ENCODE measurements at regions of chr17 and their contacts with region 1.

Region 1: GRCh38 chr17:27654654-27655524 is 23.9 kb downstream of the LGALS9 start:
- DNase-seq: peak; percentile 67 to 82
- ATAC-seq: peak; percentile 72

Region 2: GRCh38 chr17:27609611-27610303 is 45.1 kb before region 1 on chr17:
- intact Hi-C with region 1: loop called in 1 of 2 experiments (anchors 5 kb)
- DNase-seq: peak; percentile 53 to 67
- ATAC-seq: peak; percentile 75

Region 3: DNA sequence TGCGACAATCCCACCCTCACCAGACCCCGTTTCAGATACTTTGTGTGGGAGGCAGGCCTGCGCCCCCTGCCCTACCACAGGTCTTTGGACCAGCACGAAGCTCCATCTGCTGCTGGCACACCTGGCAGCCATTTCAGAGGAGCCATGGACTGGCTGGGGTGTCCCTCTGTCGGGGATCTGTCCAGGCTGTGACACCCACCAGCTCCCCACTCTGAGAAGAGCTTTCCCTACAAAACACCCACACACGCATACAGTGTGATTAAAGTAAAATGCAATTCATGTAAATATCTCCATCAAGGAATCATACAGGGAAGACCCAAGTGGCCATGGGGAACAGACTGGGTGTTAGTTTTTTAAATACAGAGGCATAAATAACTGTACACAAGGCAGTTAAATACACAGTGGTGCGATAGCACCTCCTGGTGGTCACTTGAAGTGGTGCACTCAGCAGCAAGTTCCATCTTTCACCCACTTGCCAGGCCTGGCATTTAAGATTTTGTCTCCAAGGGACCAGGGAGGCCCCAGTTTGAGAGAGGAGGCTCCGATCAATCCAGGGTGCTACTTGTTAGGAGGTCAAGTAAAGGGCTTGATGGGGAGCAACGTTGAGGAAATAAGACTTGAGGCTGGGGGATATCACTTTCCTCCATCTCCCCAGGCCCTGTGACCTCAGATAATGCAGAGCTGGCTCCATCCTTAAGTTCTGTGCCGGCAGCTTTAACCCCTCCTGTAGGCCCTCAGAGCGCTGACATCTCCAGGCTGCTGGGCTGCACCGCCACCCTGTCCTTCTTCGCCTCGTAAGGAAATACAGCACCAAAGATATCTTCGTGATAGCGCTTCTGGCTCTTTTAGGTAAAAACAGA is 101.9 kb after region 1 on chr17:
- intact Hi-C with region 1: loop called in 1 of 2 experiments (anchors 5 kb)
- DNase-seq: peak; percentile 30 to 66
- ATAC-seq: peak; percentile 47